Breast epithelium (tissue), 4 donors: ENCODE measurements at regions of chr9 and their contacts with region 1.

Region 1: GRCh38 chr9:31325778-31326177 is 1058.7 kb upstream of the ACO1 start:
- DNase-seq: no peak
- H3K4me3 ChIP-seq: no peak overlapping the region
- H3K27ac ChIP-seq: no peak overlapping the region
- H3K4me1 ChIP-seq: no peaks in the 10 kb centered on the region
- H3K27me3 ChIP-seq: no peaks in the 10 kb centered on the region
- CTCF ChIP-seq: no peak
- POLR2A ChIP-seq: no peak

Region 2: GRCh38 chr9:31359071-31359470 is 33.3 kb after region 1 on chr9:
- intact Hi-C with region 1: loop called (anchors 2 kb)
- DNase-seq: no peak
- H3K4me3 ChIP-seq: no peak overlapping the region
- H3K27ac ChIP-seq: no peak overlapping the region
- H3K4me1 ChIP-seq: no peaks in the 10 kb centered on the region
- H3K27me3 ChIP-seq: no peaks in the 10 kb centered on the region
- CTCF ChIP-seq: no peak
- POLR2A ChIP-seq: no peak